PC-9 (cell line): ENCODE measurements at regions of chr14 and their contacts with region 1.

Region 1: DNA sequence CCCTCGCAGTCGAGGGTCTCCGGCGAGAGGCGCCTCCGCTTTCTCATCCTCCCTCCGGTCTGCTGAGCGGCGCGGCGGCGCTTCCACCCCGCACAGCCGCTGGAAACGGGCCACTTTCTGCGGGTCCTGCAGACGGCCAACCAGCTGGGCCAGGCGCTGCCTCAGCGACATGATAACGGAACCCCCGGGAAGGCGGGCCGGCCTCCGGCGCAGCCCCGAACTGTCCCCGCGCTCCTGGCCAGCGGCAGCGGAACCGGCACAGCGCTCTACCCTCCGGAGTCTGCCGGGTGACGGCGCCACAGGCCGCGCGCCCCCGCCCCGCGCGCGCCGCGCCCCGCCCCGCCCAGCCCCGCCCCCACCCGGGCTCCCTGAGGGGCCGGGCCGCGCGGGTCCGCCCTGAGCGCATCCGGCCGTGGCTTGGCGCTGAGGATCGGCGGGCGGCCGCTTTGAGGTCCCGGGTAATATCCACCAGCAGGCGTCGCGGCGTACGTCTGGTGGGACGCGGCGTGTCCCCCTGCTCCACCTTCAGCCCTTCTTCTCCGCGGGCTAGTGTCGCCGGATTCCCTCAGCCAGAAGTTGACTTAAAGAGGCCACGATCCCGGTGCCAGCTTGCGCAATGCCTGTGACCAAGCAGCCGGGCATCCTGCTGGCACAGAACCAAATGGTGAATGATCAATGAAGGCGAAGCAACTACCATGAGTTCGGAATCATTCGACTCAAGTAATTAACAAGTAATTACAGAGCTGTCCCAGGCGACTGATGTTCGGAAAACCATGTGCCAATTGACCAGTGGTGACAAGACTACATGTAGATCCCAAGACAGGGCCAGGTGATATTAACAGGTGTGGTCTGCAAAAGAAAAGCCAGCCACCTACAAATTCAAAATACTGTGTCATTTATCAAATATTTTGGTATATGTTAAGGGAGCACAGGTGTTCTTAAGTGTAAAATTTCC is at the start of gene SGPP1:
- DNase-seq: peak; percentile 83
- H3K4me3 ChIP-seq: peak within 1 kb of the TSS; percentile 83
- H3K27ac ChIP-seq: peak within 1 kb of the TSS; percentile 43
- H3K4me1 ChIP-seq: peaks cover 28% of the 10 kb centered on the region
- H3K27me3 ChIP-seq: no peaks in the 10 kb centered on the region
- CTCF ChIP-seq: no peak; the same call in 1 of the 2 replicates
- total RNA-seq, gene SGPP1: 20.6 and 26.7 TPM in 2 replicates

Region 2: DNA sequence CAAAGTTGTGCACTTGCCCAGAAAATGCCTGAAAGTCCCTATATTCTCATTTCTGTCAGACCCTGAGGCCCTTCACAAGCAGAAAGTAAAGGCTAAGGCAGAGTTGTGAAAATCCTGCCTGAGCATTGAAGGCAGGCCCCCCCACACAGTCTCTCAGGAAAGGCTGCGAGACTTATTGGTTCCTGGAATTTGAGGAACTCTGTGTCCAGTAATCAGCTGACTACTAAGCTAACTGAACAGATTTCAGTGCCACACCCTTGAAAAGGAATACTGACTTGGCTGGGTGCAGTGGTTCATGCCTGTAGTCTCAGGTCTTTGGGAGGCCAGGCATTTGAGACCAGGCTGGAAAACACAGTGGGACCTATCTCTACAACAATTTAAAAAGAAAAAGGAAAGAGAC is 163.7 kb before region 1 on chr14:
- CTCF ChIA-PET with region 1: no interaction called
- POLR2A ChIA-PET with region 1: interaction called, 10 read pairs
- intact Hi-C with region 1: no loop called
- DNase-seq: peak; percentile 35 to 70
- H3K4me3 ChIP-seq: no peak overlapping the region
- H3K27ac ChIP-seq: 0 out of 2 replicates have a peak overlapping the region, but pooled peaks have one; percentile 2
- H3K4me1 ChIP-seq: peaks cover 26% of the 10 kb centered on the region
- H3K27me3 ChIP-seq: no peaks in the 10 kb centered on the region
- CTCF ChIP-seq: no peak

Region 3: GRCh38 chr14:63663430-63664341 is 64.4 kb before region 1 on chr14:
- CTCF ChIA-PET with region 1: no interaction called
- POLR2A ChIA-PET with region 1: interaction called, 7 read pairs
- intact Hi-C with region 1: loop called (anchors 1 kb)
- DNase-seq: peak; percentile 88 to 91
- H3K4me3 ChIP-seq: no peak overlapping the region
- H3K27ac ChIP-seq: peak overlapping the region; percentile 39
- H3K4me1 ChIP-seq: peaks cover 47% of the 10 kb centered on the region
- H3K27me3 ChIP-seq: no peaks in the 10 kb centered on the region
- CTCF ChIP-seq: no peak

Region 4: DNA sequence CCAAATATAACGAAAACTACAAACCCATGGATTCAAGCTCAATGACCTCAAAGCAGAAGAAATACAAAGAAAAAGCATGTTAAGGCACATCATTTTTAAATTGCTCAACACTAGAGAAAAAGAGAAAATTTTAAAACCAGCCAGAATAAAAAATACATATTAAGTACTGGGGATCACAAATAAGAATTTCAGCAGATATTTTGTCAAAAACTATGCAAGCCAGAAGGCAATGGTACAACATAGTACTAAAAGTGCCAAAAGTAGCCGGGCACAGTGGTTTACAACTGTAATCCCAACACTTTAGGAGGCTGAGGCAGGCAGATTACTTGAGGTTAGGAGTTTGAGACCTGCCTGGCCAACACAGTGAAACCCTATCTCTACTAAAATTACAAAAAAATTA is 10.3 kb before region 1 on chr14:
- CTCF ChIA-PET with region 1: no interaction called
- POLR2A ChIA-PET with region 1: no interaction called
- intact Hi-C with region 1: no loop called
- DNase-seq: peak in 1 of 2 experiments; percentile 57
- H3K4me3 ChIP-seq: no peak overlapping the region
- H3K27ac ChIP-seq: no peak overlapping the region
- H3K4me1 ChIP-seq: peaks cover 12% of the 10 kb centered on the region; the same call in 1 of the 2 replicates
- H3K27me3 ChIP-seq: no peaks in the 10 kb centered on the region
- CTCF ChIP-seq: no peak

Region 5: DNA sequence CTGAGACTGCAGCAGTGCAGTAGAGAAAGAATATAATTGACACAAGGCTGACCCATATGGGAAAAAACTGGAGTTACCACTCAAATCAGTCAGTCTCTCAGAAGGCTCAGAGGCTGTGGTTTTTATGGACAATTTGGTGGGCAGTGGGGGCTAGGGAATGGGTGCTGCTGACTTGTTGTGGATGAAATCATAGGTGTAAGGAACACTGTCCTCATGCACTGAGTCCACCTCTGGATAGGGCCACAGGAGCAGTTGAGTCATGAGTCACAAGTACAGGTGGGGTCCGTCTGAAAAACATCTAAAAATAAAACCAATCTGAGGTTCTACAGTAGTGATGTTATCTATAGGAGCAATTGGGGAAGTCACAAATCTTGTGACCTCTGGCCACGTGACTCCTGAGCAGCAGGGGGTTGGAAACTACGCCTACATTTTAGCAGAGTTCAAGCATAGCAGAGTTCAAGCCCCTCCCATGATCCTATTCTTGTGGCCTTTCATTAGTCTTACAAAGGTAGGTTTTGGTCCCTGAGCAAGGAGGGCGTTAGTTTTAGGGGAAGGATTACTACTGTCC is 17.9 kb after region 1 on chr14:
- CTCF ChIA-PET with region 1: no interaction called
- POLR2A ChIA-PET with region 1: interaction called, 37 read pairs
- intact Hi-C with region 1: no loop called
- DNase-seq: no peak
- H3K4me3 ChIP-seq: no peak overlapping the region
- H3K27ac ChIP-seq: no peak overlapping the region
- H3K4me1 ChIP-seq: peaks cover 12% of the 10 kb centered on the region
- H3K27me3 ChIP-seq: no peaks in the 10 kb centered on the region
- CTCF ChIP-seq: no peak

Region 6: DNA sequence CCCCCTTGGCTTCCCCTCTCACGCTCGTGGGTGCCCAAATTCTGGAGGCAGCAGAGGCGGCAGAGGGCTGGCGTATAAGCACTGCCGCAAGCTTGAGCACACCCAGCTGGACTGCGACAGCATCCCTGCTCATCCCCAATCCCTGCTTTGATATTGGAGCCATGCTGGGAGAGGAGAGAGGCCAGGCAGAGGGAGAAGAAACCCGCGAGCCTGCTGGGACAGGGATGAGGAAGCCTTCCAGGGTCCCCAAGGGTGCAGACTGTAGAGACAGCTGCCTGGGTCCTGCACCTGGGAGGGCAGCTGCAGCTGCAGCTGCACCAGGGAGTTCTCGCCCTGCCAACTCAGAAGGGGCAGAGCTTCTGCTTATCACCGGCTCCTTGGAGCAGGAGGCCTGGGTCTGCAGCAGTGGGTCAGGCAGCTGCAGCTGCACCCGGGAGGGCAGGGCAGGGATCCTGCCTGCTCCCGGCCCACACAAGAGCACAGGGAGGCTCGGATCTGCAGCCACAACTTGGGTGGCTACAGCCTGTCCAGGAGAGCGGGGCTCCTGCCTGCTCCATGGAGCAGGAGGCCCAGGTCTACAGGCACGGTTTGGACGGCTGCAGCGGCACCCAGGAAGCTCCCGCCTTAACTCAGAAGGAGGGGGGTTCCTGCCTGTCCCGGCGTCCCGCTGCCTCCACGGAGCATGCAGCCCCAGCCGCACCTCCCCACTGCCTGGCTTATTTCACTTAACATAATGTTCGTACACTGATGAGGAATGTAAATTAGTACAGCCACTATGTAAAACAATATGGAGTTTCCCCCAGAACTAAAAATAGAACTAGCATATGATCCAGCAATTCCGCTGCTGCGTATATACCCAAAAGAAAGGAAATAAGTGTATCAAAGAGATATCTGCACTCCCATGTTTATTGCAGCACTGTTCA is 60.2 kb after region 1 on chr14:
- CTCF ChIA-PET with region 1: no interaction called
- POLR2A ChIA-PET with region 1: no interaction called
- intact Hi-C with region 1: no loop called
- DNase-seq: no peak
- H3K4me3 ChIP-seq: no peak overlapping the region
- H3K27ac ChIP-seq: no peak overlapping the region
- H3K4me1 ChIP-seq: no peaks in the 10 kb centered on the region
- H3K27me3 ChIP-seq: no peaks in the 10 kb centered on the region
- CTCF ChIP-seq: no peak